ENCODE measurements at regions of chr15 and their contacts with region 1.

Region 1: GRCh38 chr15:90400406-90401314 is 12.6 kb downstream of the IQGAP1 start:
- DNase-seq: peak; percentile 92 to 99 (median 98)
- H3K4me3 ChIP-seq: peak overlapping the region; percentile 11 to 60 (median 41)
- H3K4me3 Mint-ChIP-seq: peak overlapping the region; percentile 66 to 86
- H3K27ac ChIP-seq: peak overlapping the region; percentile 94 to 99
- H3K27ac Mint-ChIP-seq: peak overlapping the region; percentile 99 to 100 (median 99)
- H3K4me1 ChIP-seq: peaks cover 63 to 83% of the 10 kb centered on the region in 2 donors
- H3K4me1 Mint-ChIP-seq: peaks cover 70% of the 10 kb centered on the region
- H3K27me3 ChIP-seq: no peaks in the 10 kb centered on the region
- H3K27me3 Mint-ChIP-seq: no peaks in the 10 kb centered on the region
- CTCF ChIP-seq: no peak

Region 2: DNA sequence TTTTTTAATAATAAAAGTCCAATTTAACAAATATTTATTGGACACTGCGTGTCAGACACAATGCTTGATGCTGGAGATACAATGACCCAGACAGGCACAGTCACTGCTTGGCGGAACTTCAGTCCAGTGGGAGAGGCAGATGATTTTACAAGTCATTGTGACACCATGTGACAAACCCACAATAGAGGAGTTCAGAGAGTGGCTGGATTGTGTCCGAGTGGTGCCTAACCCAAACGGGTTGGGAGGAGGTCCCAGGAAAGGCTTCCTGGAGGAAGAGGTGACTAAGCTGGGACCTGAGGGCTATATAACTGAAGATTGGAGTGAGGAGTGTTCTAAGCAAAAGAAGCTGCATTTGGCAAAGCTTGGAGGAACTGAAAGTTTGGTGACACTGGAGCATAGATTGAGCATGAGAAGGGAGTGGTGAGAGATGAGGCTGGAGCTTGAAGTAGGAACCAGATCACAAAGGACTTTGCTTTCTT is 170.4 kb after region 1 on chr15:
- intact Hi-C with region 1: loop called in 1 of 2 experiments (anchors 10 kb)
- DNase-seq: peak; percentile 91 to 96 (median 95)
- H3K4me3 ChIP-seq: peak overlapping the region in 2 of 3 experiments; percentile 48 to 52
- H3K4me3 Mint-ChIP-seq: peak overlapping the region; percentile 83 to 87
- H3K27ac ChIP-seq: peak overlapping the region; percentile 79 to 94
- H3K27ac Mint-ChIP-seq: peak overlapping the region; percentile 94 to 100 (median 98)
- H3K4me1 ChIP-seq: peaks cover 57 to 64% of the 10 kb centered on the region in 2 donors
- H3K4me1 Mint-ChIP-seq: peaks cover 64% of the 10 kb centered on the region
- H3K27me3 ChIP-seq: no peaks in the 10 kb centered on the region
- H3K27me3 Mint-ChIP-seq: peaks cover 0 to 2% (median 0%) of the 10 kb centered on the region in 3 donors
- CTCF ChIP-seq: no peak